ENCODE measurements at regions of chr11 and their contacts with region 1.

Region 1: DNA sequence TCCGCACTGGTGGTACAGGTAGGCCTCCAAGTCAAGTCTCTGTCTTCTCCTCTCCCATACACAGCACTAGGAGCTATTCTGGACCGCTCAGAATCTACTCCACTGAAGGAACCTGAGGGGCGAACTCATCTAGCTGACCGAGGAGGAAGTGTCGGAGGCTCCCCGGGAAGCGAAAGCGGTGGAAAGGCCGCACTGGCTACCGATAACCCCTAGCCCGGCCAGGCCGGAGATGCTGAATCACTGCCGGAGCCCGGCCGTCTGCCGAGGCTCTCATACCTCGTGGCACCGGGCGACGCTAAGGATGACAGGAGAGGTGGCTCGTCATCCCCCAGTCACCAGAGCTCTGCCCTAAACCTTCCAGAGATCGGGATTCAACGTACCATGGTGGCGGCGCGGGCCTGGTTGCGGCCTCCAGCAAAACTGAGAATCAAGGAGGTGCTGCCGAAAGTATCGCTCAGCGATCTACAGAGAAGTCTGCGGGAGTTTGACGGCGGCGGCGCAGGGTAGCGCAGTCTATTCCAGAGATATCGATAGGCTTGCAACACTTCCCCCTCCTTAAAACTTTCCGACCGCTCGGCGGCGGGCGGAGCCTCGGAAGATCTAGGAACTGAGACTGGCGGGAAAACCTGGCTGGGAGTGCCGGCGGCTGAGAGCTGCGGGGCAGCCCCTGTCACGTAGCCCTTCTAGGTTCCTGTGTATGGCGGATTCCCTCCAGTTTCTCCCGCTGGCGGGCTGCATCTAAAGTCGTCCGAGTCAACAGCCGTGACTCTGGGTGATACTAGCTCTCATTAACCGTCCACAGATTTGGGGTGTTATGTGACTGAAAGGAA is at the start of gene PSMA1:
- DNase-seq: peak; percentile 82
- ATAC-seq: peak; percentile 91
- H3K4me3 Mint-ChIP-seq: peak within 1 kb of the TSS; percentile 96
- H3K27ac Mint-ChIP-seq: peak within 1 kb of the TSS; percentile 95
- H3K4me1 Mint-ChIP-seq: peaks cover 27% of the 10 kb centered on the region
- H3K27me3 Mint-ChIP-seq: no peaks in the 10 kb centered on the region
- CTCF ChIP-seq: no peak
- total RNA-seq, gene PSMA1: 184 and 198 TPM in 2 replicates

Region 2: DNA sequence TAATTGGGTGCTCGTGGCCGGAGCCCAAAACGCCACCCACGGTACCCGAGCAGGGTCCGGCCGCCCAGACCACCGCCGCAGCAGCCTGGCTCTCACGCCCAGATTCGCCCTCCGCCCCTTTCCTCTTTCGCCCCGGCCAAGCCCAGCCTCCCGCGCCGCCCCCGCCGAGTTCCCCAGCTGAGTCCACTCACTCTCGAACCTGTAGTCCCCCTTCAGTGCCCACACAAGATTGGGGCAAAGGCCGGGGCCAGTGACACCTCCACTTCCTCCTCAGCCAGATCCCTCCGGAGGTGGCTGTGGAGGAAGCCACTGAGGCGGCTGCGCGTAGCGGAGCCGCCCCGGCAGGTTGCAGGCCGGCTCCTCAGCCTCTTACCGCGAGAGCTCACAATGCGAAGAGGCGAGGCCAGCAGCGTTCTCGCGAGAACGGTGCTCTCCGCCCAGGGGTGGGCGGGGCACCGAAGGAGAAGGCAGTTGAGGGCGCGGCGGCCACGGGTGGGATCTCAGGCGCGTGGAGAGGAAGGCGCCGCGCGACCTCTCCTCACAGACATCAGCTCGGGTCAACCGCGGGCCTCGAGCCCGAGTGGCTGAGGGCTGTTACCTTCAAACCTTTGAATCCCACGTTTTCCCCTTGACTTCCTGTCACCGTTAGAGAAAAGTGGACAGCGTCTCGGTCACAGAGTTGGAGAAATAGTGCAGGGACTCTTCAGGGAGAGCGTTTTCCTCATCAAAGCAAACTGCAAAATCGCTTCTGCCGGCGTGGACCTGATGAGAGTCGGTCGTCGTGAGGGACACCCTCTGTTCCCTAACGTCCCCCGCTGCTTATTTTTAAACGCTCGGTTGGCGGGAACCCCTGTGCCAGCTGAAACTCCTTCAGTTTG is 1057.0 kb before region 1 on chr11 and contains the start of gene BTBD10:
- CTCF ChIA-PET with region 1: no interaction called
- POLR2A ChIA-PET with region 1: no interaction called
- intact Hi-C with region 1: loop called (anchors 1 kb)
- DNase-seq: peak; percentile 91
- ATAC-seq: peak; percentile 98
- H3K4me3 Mint-ChIP-seq: peak within 1 kb of the TSS; percentile 98
- H3K27ac Mint-ChIP-seq: peak within 1 kb of the TSS; percentile 95
- H3K4me1 Mint-ChIP-seq: peaks cover 43% of the 10 kb centered on the region
- H3K27me3 Mint-ChIP-seq: no peaks in the 10 kb centered on the region
- CTCF ChIP-seq: no peak
- total RNA-seq, gene BTBD10: 18.8 and 25.1 TPM in 2 replicates

Region 3: GRCh38 chr11:14320020-14320419 is 200.1 kb before region 1 on chr11:
- CTCF ChIA-PET with region 1: no interaction called
- POLR2A ChIA-PET with region 1: interaction called, 18 read pairs
- intact Hi-C with region 1: no loop called
- DNase-seq: no peak
- ATAC-seq: no peak
- H3K4me3 Mint-ChIP-seq: peak overlapping the region; percentile 65
- H3K27ac Mint-ChIP-seq: peak overlapping the region; percentile 83
- H3K4me1 Mint-ChIP-seq: peaks cover 93% of the 10 kb centered on the region
- H3K27me3 Mint-ChIP-seq: no peaks in the 10 kb centered on the region
- CTCF ChIP-seq: no peak

Region 4: DNA sequence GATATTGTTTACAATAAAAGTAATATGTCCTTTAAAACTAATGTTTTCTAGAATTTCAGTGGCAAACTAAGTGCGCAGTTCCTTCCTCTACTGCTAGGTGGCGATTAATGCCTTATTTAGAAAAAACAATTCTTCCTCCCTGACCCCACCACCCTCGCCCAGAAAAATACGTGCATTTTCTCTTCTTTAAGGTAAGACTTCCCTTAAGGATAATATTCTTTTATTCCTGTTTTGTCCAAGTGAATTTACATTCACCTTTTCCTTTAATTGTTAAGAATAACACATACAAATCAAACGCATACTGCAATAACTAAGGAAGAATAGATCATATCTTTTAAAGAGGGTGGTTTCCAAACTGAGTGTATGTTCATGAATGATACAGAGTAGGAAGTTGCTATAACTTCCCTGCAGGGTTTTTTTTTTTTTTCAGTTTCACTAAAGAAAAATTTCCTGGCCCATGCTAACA is 17.0 kb after region 1 on chr11:
- CTCF ChIA-PET with region 1: interaction called, 3 read pairs
- POLR2A ChIA-PET with region 1: no interaction called
- intact Hi-C with region 1: loop called (anchors 1 kb)
- DNase-seq: no peak
- ATAC-seq: peak; percentile 88
- H3K4me3 Mint-ChIP-seq: peak overlapping the region; percentile 80
- H3K27ac Mint-ChIP-seq: peak overlapping the region; percentile 81
- H3K4me1 Mint-ChIP-seq: peaks cover 9% of the 10 kb centered on the region
- H3K27me3 Mint-ChIP-seq: no peaks in the 10 kb centered on the region
- CTCF ChIP-seq: peak; percentile 86

Region 5: DNA sequence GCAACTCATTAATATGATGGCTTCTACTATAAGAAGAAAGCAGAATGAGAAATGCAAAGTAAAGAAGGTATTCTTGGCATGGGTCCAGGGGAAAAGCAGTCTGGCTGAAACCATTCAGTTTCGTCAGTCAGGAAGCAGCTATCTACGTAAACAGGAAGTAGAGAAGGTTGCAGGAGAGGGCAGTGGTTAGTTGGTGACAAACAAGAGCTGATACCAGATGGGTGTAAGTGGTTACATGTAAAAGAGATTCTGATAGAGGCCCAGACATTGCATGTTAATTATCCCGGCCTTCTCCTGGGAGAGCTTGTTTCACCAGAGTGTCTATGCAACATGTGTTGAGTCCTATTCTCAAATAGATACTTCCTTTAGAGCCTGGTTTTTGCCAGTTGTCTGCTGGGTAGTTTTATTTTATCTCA is 58.4 kb after region 1 on chr11:
- CTCF ChIA-PET with region 1: no interaction called
- POLR2A ChIA-PET with region 1: interaction called, 6 read pairs
- intact Hi-C with region 1: loop called (anchors 2 kb)
- DNase-seq: no peak
- ATAC-seq: peak; percentile 94
- H3K4me3 Mint-ChIP-seq: peak overlapping the region; percentile 50
- H3K27ac Mint-ChIP-seq: peak overlapping the region; percentile 77
- H3K4me1 Mint-ChIP-seq: peaks cover 33% of the 10 kb centered on the region
- H3K27me3 Mint-ChIP-seq: peaks cover 1% of the 10 kb centered on the region
- CTCF ChIP-seq: no peak

Region 6: DNA sequence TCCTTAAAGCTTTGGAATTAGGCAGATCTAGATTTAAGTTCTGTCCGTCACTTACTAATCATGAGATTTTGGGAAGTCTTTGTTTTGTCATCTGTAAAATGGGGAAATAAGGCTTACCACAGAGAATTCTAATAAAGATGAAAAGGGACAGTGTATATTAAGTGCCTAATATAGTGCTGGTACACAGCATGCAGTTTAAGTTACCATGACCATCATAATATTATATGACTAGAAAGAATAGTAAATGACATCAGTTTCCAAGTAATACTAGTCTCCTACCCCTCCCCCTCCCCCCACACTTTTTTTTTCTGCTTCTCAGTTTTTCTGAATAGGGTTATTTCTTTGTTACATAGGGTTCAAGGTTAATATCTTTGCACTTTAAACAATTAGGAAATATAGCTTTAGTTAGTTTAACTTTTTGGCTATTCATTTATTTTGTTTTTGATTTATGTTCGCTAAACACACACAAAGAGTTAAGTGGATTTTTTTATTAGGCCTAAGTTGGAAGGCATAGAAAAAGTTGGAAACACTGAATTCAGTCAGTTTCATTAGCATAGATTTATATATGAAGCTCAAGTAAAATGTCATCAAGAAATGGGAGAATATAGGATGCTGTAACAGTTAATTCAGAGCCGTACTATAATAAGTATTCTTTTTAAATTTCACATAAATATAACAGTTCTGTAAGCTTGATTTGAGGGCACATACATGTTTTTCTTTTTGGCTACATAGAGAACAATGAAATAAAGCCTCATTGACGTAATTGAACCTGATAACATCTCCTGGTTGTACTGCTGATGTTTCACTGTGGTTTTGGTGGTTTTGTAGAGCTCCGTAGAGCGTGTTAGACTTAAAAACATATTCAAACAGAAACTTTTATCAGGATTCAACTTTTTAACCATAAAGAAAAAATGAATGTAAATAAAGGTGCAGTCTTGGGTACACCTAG is 244.7 kb after region 1 on chr11:
- CTCF ChIA-PET with region 1: no interaction called
- POLR2A ChIA-PET with region 1: interaction called, 4 read pairs
- intact Hi-C with region 1: loop called (anchors 2 kb)
- DNase-seq: no peak
- ATAC-seq: peak; percentile 87
- H3K4me3 Mint-ChIP-seq: peak overlapping the region; percentile 38
- H3K27ac Mint-ChIP-seq: peak overlapping the region; percentile 74
- H3K4me1 Mint-ChIP-seq: peaks cover 34% of the 10 kb centered on the region
- H3K27me3 Mint-ChIP-seq: no peaks in the 10 kb centered on the region
- CTCF ChIP-seq: no peak

Region 7: GRCh38 chr11:15208378-15209222 is 688.5 kb after region 1 on chr11:
- CTCF ChIA-PET with region 1: no interaction called
- POLR2A ChIA-PET with region 1: no interaction called
- intact Hi-C with region 1: loop called (anchors 5 kb)
- DNase-seq: peak; percentile 66
- ATAC-seq: peak; percentile 97
- H3K4me3 Mint-ChIP-seq: no peak overlapping the region
- H3K27ac Mint-ChIP-seq: no peak overlapping the region
- H3K4me1 Mint-ChIP-seq: no peaks in the 10 kb centered on the region
- H3K27me3 Mint-ChIP-seq: peaks cover 12% of the 10 kb centered on the region
- CTCF ChIP-seq: peak; percentile 67